ENCODE measurements at regions of chr16 and their contacts with region 1.

Region 1: GRCh38 chr16:24139282-24139681 is 116.9 kb upstream of the CACNG3 start:
- DNase-seq: peak; percentile 54
- H3K4me3 Mint-ChIP-seq: no peak overlapping the region
- H3K27ac Mint-ChIP-seq: no peak overlapping the region
- H3K4me1 Mint-ChIP-seq: peaks cover 21% of the 10 kb centered on the region
- H3K27me3 Mint-ChIP-seq: no peaks in the 10 kb centered on the region

Region 2: GRCh38 chr16:24151482-24151939 is 12.2 kb after region 1 on chr16:
- CTCF ChIA-PET with region 1: interaction called, 3 read pairs
- intact Hi-C with region 1: loop called (anchors 1 kb)
- DNase-seq: peak; percentile 38
- H3K4me3 Mint-ChIP-seq: no peak overlapping the region
- H3K27ac Mint-ChIP-seq: peak overlapping the region; percentile 57
- H3K4me1 Mint-ChIP-seq: peaks cover 36% of the 10 kb centered on the region
- H3K27me3 Mint-ChIP-seq: no peaks in the 10 kb centered on the region

Region 3: DNA sequence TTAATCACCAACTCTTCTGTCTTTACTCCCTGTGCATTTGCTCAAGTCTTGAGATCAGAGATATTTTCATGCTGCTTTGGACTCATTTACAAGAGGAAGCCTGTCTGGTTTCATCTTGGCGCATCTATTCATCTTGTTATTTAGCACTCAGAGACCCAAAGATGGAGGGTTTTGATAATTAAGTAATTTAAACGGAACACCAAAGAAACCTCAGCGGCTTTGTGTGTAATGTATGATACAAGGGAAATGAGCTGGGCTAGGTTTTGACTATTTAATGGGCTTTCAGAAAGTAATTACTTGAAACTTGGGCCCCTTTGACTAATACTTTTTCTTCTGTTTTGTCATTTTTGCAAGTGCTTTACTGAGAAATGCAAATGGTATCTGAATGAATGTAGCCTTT is 50.7 kb after region 1 on chr16:
- CTCF ChIA-PET with region 1: no interaction called
- intact Hi-C with region 1: loop called (anchors 1 kb)
- DNase-seq: peak; percentile 13
- H3K4me3 Mint-ChIP-seq: no peak overlapping the region
- H3K27ac Mint-ChIP-seq: peak overlapping the region; percentile 46
- H3K4me1 Mint-ChIP-seq: peaks cover 23% of the 10 kb centered on the region
- H3K27me3 Mint-ChIP-seq: no peaks in the 10 kb centered on the region

Measured in activated naive CD4-positive, alpha-beta T cell treated with anti-CD3 and anti-CD28 coated beads for 36 hours (primary cell).